Activated CD4-positive, alpha-beta T cell treated with anti-CD3 and anti-CD28 coated beads, Interleukin-2, amount 10 ng/mL, durations not matched to agents 7 days and 5 days (primary cell): ENCODE measurements at regions of chr16 and their contacts with region 1.

Region 1: GRCh38 chr16:66977341-66978113 is 10.9 kb upstream of the CES4A start:
- DNase-seq: peak; percentile 91
- H3K4me3 Mint-ChIP-seq: no peak overlapping the region
- H3K27ac Mint-ChIP-seq: peak overlapping the region; percentile 62
- H3K4me1 Mint-ChIP-seq: peaks cover 67% of the 10 kb centered on the region
- H3K27me3 Mint-ChIP-seq: no peaks in the 10 kb centered on the region

Region 2: GRCh38 chr16:66934153-66934838 is 43.2 kb before region 1 on chr16 and contains the start of gene CIAO2B:
- CTCF ChIA-PET with region 1: no interaction called
- POLR2A ChIA-PET with region 1: no interaction called
- DNase-seq: peak; percentile 89
- H3K4me3 Mint-ChIP-seq: peak within 1 kb of the TSS; percentile 99
- H3K27ac Mint-ChIP-seq: peak within 1 kb of the TSS; percentile 97
- H3K4me1 Mint-ChIP-seq: peaks cover 54% of the 10 kb centered on the region
- H3K27me3 Mint-ChIP-seq: no peaks in the 10 kb centered on the region
- total RNA-seq, gene CIAO2B: 95.2 to 112 TPM

Region 3: DNA sequence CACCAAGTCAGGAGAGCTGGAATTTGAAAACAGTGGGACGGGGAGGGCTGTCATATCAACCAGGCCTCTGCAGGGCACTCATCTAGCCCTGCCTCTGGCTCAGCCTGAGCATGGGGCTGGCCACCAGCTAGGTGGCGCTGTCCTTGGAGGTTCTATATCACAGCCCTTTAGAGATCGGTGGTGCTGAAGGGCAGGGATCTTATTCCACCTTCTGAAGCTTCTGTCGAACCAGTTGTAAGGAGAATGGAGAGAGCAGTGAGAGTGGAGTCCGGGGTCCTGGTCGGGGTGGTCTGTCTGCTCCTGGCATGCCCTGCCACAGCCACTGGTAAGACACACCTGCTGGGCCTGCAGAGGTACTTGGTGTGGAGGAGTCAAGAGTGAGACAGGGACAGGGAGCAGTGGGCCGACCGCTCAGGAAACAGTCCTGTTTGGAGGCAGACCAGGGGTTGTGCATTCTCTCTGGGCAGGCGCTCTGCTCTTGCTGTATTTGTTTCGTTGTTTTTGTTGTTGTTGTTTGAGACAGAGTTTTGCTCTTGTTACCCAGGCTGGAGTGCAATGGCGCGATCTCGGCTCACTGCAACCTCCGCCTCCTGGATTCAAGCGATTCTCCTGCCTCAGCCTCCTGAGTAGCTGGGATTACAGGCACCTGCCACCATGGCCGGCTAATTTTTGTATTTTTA is 16.3 kb before region 1 on chr16 and contains the start of gene CES3:
- CTCF ChIA-PET with region 1: interaction called, 15 read pairs
- POLR2A ChIA-PET with region 1: no interaction called
- DNase-seq: peak; percentile 75
- H3K4me3 Mint-ChIP-seq: peak within 1 kb of the TSS; percentile 63
- H3K27ac Mint-ChIP-seq: peak within 1 kb of the TSS; percentile 91
- H3K4me1 Mint-ChIP-seq: peaks cover 44% of the 10 kb centered on the region
- H3K27me3 Mint-ChIP-seq: no peaks in the 10 kb centered on the region
- total RNA-seq, gene CES3: 5.9 to 6.4 TPM

Region 4: GRCh38 chr16:67100569-67101310 is 123.2 kb after region 1 on chr16:
- CTCF ChIA-PET with region 1: interaction called, 10 read pairs
- POLR2A ChIA-PET with region 1: no interaction called
- DNase-seq: no peak
- H3K4me3 Mint-ChIP-seq: no peak overlapping the region
- H3K27ac Mint-ChIP-seq: peak overlapping the region; percentile 50
- H3K4me1 Mint-ChIP-seq: no peaks in the 10 kb centered on the region
- H3K27me3 Mint-ChIP-seq: no peaks in the 10 kb centered on the region